ENCODE measurements at regions of chr2 and their contacts with region 1.

Region 1: DNA sequence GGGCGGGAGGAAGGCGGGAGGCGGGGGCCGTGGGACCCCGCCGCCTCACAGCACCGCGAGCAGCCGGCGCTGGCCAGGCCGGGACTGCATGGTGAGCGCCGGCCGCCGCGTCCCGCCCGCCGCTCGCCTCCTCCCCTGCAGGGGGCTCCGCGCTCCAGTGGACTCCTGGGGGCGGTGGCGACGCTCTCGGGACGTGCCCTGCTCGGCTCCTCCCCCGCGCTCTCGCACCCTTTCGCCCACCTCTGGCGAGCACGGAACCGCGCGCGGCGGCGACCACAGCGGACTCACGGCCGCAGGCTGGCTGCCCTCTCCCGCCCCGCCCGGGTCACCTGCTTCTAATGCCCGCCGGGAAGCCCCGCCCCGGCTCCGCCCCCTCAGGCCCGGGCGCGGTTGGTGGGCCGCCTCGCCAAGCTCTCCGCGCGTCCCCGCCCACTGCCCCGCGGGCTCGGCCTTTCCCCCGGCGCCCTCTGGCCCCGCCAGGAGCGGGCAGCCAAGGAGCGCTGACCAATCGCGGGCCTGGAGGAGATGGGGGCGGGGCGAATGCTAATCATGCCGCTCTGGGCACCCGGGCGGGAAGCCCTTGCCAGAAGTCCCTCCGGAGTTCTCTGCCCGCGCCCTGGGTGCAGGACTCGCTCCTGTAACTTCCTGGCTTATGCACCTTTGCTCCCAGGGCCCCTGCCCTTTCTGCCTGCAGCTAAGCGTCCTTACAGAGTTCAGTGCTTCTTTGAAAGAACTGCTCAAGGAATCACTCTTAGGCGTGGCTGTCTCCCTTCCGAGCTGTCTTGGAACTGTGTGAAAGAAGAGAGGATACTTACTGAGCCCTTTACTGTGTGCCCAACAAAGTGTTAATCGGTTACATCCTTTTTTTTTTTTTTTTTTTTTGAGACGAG is at the start of gene FZD5:
- DNase-seq: peak; percentile 99
- total RNA-seq, gene FZD5: 3.7 TPM

Region 2: GRCh38 chr2:207792244-207792785 is 22.5 kb after region 1 on chr2:
- intact Hi-C with region 1: loop called (anchors 2 kb)
- DNase-seq: peak; percentile 61

Region 3: GRCh38 chr2:207825045-207825954 is 55.5 kb after region 1 on chr2:
- intact Hi-C with region 1: no loop called
- DNase-seq: no peak

Region 4: DNA sequence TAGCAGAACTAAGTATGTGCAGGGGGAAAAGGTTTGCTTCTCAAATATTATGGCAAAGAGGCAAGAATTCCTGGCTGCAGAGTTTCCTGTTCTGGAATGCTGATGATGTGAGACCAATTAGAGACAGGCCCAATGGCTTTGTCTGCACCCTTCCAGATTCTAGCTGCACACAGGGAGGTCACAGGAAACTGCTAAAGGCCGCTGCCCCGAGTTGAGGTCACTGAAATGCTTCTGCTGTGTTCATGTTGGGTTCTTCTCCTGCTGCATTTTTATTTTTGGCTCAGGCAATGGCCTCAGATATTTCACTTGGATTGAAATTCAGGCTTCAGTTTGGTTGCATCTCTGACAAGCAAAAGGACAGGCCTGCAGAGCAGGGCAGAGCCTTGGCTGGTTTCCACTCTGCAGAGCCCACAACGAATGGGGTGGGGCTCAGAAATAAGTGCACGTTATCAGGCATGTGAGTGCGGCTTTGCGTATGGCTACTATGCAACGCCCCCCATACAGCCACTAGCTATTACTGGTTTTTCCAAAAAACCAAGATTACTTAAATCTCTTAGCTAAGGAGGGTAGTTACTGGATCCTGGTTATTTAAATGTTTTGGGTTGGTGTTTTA is 66.8 kb after region 1 on chr2:
- intact Hi-C with region 1: loop called (anchors 5 kb)
- DNase-seq: no peak

Region 5: GRCh38 chr2:207974216-207974605 is 204.4 kb after region 1 on chr2:
- intact Hi-C with region 1: loop called (anchors 2 kb)
- DNase-seq: no peak

Region 6: DNA sequence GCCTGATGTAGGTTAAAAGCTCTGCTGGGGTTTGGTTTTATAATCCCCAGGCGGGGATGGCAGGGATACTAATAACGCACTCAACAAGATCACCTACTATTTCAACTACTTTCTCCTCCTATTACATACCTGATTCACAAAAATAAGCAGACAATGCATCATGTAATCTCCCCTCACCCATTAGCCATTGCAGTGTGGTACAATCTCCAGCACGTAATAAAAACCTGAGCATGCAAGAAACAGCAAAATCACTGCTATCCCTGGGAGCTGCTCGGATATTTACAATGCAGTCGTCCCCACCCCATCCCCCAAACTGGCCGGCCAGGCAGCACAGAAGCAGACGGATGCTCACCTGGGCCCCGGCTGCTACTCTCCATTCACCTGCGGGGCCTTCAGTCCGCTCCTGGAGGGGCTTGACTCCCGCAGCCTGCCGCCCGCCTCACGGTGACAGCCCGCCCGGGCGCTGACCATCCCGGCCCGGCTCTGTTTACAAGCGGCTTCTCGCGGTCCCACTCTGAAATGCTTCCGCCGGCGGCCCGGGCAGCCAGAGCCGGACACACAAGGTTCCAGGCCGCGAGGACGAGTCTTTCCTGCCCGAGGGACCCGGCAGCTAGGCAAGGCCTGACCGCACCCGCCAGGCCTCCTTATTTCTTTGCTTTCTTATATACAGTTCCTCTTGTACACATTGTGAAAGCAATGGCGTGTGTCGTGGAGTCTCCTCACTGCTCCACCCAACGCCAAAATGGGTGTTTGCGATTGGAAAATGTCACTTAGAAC is 255.4 kb after region 1 on chr2 and contains the start of gene PLEKHM3:
- intact Hi-C with region 1: loop called (anchors 5 kb)
- DNase-seq: peak; percentile 93
- total RNA-seq, gene PLEKHM3: 12.0 TPM

Measured in cardiac septum (tissue), 1 donor.